ENCODE measurements at regions of chr4 and their contacts with region 1.

Region 1: GRCh38 chr4:57544811-57545654 is 434.8 kb upstream of the IGFBP7 start:
- DNase-seq: no peak
- H3K4me3 ChIP-seq: no peak overlapping the region
- H3K27ac ChIP-seq: no peak overlapping the region
- H3K4me1 ChIP-seq: no peaks in the 10 kb centered on the region
- H3K27me3 ChIP-seq: no peaks in the 10 kb centered on the region
- CTCF ChIP-seq: no peak
- EP300 ChIP-seq: no peak
- POLR2A ChIP-seq: no peak

Region 2: DNA sequence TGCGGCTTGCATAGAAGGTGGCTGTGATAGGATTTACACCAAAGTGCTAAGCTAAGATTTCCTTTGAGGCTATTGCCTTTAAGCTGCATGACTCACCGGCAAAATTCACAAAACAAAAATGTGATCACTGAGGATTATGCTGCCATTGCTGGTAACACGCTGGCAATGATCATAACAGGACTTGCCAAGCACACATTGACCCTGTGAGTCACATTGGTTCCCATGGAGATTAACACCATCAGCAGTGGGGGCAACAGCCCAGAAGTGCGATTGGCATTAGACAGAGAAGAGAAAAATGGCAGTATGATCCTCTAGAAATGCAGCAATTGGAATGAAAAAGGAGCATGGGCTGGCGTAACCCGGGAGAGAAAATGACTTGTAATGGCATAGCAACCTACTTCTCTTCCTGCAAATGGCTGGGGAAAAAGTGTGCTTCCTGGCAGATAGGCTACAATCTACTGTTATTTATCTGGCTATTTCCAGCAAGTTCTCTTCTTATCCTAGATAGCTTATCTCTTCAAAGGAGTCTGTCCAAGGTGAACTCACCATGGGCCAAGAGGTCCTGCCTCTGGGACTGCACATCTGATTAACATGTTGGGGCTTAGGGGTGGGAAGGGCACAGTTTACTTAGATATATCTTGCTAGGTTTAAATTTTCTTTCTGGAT is 120.7 kb before region 1 on chr4:
- intact Hi-C with region 1: no loop called
- DNase-seq: no peak
- H3K4me3 ChIP-seq: no peak overlapping the region
- H3K27ac ChIP-seq: no peak overlapping the region
- H3K4me1 ChIP-seq: no peaks in the 10 kb centered on the region
- H3K27me3 ChIP-seq: no peaks in the 10 kb centered on the region
- CTCF ChIP-seq: no peak
- EP300 ChIP-seq: no peak
- POLR2A ChIP-seq: no peak

Region 3: GRCh38 chr4:57602141-57602540 is 57.1 kb after region 1 on chr4:
- intact Hi-C with region 1: loop called in 1 of 4 experiments (anchors 2 kb)
- DNase-seq: no peak
- H3K4me3 ChIP-seq: no peak overlapping the region
- H3K27ac ChIP-seq: no peak overlapping the region
- H3K4me1 ChIP-seq: no peaks in the 10 kb centered on the region
- H3K27me3 ChIP-seq: no peaks in the 10 kb centered on the region
- CTCF ChIP-seq: no peak
- EP300 ChIP-seq: no peak
- POLR2A ChIP-seq: no peak

Region 4: DNA sequence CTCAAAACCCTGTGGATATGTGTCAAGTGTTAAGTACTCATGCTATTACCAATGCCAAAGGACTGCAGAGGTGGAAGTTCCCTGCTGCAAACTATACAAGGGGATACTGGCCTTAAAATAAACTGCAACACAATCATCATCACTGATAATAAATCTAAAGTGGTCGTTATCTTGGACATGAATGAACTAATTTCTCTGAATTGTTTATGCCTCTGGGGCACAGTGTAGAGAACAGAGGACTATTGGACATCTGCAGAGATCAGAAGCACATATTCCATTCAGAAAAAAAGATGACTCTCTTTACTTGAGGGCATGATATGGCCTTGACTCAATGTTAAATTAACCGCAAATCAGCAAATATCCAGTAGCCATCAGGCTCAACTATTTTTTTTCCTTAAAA is 107.7 kb after region 1 on chr4:
- intact Hi-C with region 1: no loop called
- DNase-seq: no peak
- H3K4me3 ChIP-seq: no peak overlapping the region
- H3K27ac ChIP-seq: no peak overlapping the region
- H3K4me1 ChIP-seq: no peaks in the 10 kb centered on the region
- H3K27me3 ChIP-seq: no peaks in the 10 kb centered on the region
- CTCF ChIP-seq: no peak
- EP300 ChIP-seq: no peak
- POLR2A ChIP-seq: no peak

Measured in ovary (tissue), 10 donors.